SK-N-SH (cell line): ENCODE measurements at regions of chr4 and their contacts with region 1.

Region 1: DNA sequence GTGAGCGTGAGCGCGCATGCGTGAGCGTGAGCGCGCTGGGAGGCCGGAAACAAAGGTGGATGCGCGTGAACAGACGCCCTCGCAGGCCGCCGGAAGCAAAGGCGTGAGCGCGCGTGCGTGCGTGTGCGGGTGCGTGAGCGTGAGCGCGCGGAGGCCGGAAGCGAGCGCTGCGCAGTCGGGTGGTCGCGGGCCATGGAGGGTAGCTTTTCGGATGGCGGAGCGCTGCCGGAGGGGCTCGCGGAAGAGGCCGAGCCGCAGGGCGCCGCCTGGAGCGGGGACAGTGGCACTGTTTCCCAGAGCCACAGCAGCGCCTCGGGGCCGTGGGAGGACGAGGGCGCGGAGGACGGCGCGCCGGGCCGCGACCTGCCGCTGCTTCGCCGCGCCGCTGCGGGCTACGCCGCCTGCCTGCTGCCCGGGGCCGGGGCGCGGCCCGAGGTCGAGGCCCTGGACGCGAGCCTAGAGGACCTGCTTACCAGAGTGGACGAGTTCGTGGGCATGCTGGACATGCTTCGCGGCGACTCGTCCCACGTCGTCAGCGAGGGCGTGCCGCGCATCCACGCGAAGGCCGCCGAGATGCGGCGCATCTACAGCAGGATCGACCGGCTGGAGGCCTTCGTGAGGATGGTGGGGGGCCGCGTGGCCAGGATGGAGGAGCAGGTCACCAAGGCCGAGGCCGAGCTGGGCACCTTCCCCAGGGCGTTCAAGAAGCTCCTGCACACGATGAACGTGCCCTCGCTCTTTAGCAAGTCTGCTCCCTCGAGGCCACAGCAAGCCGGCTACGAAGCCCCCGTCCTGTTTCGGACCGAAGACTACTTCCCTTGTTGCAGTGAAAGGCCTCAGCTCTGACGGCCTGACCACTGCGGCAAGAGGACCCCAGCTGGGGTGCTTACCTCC is at the start of gene BLOC1S4:
- DNase-seq: peak; percentile 97
- H3K4me3 ChIP-seq: peak within 1 kb of the TSS; percentile 81 to 83
- H3K27ac ChIP-seq: peak within 1 kb of the TSS; percentile 60 to 85
- H3K4me1 ChIP-seq: peaks cover 0 to 6% of the 10 kb centered on the region in 2 experiments; a peak in 2 of 4 replicates
- H3K27me3 ChIP-seq: no peaks in the 10 kb centered on the region
- CTCF ChIP-seq: no peak
- EP300 ChIP-seq: no peak
- RAD21 ChIP-seq: no peak
- polyA plus RNA-seq, gene BLOC1S4: 21.9 and 22.1 TPM in 2 replicates

Region 2: GRCh38 chr4:6730603-6731317 is 14.5 kb after region 1 on chr4:
- CTCF ChIA-PET with region 1: interaction called, 25 read pairs
- POLR2A ChIA-PET with region 1: no interaction called
- DNase-seq: no peak
- H3K4me3 ChIP-seq: no peak overlapping the region
- H3K27ac ChIP-seq: no peak overlapping the region
- H3K4me1 ChIP-seq: no peaks in the 10 kb centered on the region
- H3K27me3 ChIP-seq: no peaks in the 10 kb centered on the region
- CTCF ChIP-seq: no peak
- EP300 ChIP-seq: no peak
- RAD21 ChIP-seq: no peak

Region 3: GRCh38 chr4:6885951-6886557 is 169.8 kb after region 1 on chr4:
- CTCF ChIA-PET with region 1: interaction called, 43 read pairs
- POLR2A ChIA-PET with region 1: no interaction called
- DNase-seq: no peak
- H3K4me3 ChIP-seq: no peak overlapping the region
- H3K27ac ChIP-seq: no peak overlapping the region
- H3K4me1 ChIP-seq: peaks cover 0 to 3% of the 10 kb centered on the region in 2 experiments; a peak in 1 of 4 replicates
- H3K27me3 ChIP-seq: no peaks in the 10 kb centered on the region
- CTCF ChIP-seq: no peak; the same call in 1 of the 2 replicates
- EP300 ChIP-seq: no peak
- RAD21 ChIP-seq: no peak

Region 4: GRCh38 chr4:7156761-7157488 is 440.7 kb after region 1 on chr4:
- CTCF ChIA-PET with region 1: no interaction called
- POLR2A ChIA-PET with region 1: no interaction called
- DNase-seq: peak; percentile 76
- H3K4me3 ChIP-seq: no peak overlapping the region
- H3K27ac ChIP-seq: no peak overlapping the region
- H3K4me1 ChIP-seq: peaks cover 0 to 20% of the 10 kb centered on the region in 2 experiments; a peak in 2 of 4 replicates
- H3K27me3 ChIP-seq: peaks cover 30% of the 10 kb centered on the region
- CTCF ChIP-seq: peak; percentile 48
- EP300 ChIP-seq: peak in 1 of 2 experiments; percentile 45; a peak in 1 of 4 replicates
- RAD21 ChIP-seq: no peak